Esophagus squamous epithelium (tissue), 5 donors: ENCODE measurements at regions of chr19 and their contacts with region 1.

Region 1: DNA sequence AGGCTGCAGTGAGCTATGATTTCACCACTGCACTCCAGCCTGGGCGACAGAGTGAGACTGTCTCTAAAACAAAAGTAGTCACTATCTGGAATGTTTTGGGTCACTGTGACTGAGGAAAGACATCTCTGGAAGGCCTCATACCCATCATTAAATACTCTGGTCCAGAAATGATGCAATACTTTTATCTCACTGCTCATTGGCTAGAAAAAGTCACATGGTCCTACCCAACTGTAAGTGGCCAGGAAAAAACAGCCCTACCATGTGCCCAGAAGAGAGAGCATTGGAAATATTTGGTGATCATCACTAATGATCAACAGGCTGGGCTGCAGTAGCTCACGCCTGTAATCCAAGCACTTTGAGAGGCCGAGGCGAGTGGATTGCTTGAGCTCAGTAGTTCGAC is 29.8 kb downstream of the PNPLA6 start:
- DNase-seq: no peak
- H3K4me3 ChIP-seq: no peak overlapping the region
- H3K27ac ChIP-seq: no peak overlapping the region
- H3K4me1 ChIP-seq: peaks cover 0 to 6% (median 0%) of the 10 kb centered on the region in 3 donors
- H3K27me3 ChIP-seq: no peaks in the 10 kb centered on the region
- CTCF ChIP-seq: no peak
- POLR2A ChIP-seq: no peak

Region 2: DNA sequence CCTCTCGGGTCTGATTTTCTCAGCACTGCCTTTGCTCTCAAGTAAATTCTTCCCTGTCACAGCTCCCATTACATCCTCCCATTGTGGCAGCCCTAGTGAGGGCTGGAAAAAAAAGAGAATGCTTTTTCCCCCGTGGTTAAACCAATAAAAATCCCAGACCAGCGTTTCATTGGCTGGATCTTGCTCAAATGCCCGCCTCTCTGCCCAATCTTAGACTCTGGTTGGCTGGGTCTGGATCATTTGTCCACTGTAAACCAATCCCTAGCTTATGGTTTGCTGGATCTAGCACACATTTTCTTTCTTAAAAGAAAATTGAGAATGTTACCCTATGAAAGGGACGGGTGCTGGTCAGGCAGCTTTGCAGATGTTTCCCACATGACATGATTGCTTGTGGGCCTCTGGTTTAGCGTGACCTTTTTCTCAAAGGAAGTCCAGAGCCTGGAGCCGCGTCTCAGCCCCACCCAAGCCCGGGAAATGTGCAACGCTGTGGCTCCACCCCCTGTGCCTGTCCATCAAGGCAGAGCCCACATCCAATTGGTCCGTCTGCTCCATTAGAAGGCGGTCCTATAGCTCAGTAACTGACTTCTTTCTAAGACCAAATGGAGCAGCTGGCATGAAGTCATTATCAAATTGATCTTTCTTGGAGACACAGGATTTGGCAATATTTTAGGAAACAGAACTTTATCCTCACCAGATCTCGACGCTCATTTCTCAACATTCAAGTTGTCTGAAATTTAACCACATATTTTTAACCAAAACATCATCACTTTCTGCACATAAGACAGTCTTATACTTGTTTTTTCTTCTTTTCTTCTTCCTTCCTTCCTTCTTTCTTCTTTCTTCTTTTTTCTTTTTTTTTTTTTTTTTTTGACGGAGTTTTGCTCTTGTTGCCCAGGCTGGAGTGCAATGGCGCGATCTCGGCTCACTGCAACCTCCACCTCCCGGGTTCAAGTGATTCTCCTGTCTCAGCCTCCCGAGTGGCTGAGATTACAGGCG is 109.0 kb after region 1 on chr19:
- intact Hi-C with region 1: loop called (anchors 5 kb)
- DNase-seq: no peak
- H3K4me3 ChIP-seq: no peak overlapping the region
- H3K27ac ChIP-seq: peak overlapping the region in 1 of 4 donors; percentile 41
- H3K4me1 ChIP-seq: peaks cover 0 to 20% (median 0%) of the 10 kb centered on the region in 3 donors
- H3K27me3 ChIP-seq: peaks cover 0 to 94% (median 0%) of the 10 kb centered on the region in 4 donors
- CTCF ChIP-seq: no peak
- POLR2A ChIP-seq: no peak

Region 3: GRCh38 chr19:7799640-7800355 is 234.5 kb after region 1 on chr19:
- intact Hi-C with region 1: loop called (anchors 5 kb)
- DNase-seq: no peak
- H3K4me3 ChIP-seq: peak overlapping the region in 2 of 4 donors; percentile 11 to 56
- H3K27ac ChIP-seq: no peak overlapping the region
- H3K4me1 ChIP-seq: peaks cover 0 to 19% (median 4%) of the 10 kb centered on the region in 3 donors
- H3K27me3 ChIP-seq: peaks cover 0 to 90% (median 3%) of the 10 kb centered on the region in 4 donors
- CTCF ChIP-seq: peak; percentile 38 to 80 (median 56)
- POLR2A ChIP-seq: no peak